ENCODE measurements at regions of chr16 and their contacts with region 1.

Region 1: DNA sequence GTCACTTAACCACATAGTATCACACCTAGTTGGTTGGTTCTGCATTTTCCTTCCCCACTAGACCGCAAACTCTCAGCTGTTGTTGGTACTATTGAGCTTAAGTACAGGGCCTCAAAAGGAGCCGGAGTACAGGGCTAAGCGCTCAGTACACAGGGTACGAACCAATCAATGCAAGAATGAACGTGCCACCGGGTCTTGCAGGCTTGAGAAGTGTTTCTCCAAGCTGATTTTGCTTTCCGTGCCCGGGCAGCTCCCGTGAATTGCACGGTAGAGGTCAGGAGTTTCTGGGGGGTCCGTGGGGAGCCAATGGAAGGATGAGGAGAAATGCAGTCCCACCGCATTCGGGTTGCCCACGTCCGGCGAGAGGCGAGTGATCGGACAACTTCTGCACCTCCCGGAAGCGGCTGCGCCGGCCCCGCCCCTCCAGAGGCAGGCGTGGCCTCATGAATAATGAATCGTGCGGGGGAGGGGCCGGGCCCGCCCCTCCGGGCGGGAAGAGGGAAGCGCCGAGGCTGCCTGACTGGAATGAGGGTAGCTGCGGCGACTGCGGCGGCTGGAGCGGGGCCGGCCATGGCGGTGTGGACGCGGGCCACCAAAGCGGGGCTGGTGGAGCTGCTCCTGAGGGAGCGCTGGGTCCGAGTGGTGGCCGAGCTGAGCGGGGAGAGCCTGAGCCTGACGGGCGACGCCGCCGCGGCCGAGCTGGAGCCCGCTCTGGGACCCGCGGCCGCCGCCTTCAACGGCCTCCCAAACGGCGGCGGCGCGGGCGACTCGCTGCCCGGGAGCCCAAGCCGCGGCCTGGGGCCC is at the start of gene SNTB2:
- DNase-seq: peak; percentile 76 to 97
- H3K4me3 ChIP-seq: peak within 1 kb of the TSS; percentile 83 to 91
- H3K27ac ChIP-seq: peak within 1 kb of the TSS; percentile 93 to 95
- H3K4me1 ChIP-seq: peaks cover 5 to 39% of the 10 kb centered on the region in 2 donors
- H3K27me3 ChIP-seq: no peaks in the 10 kb centered on the region
- CTCF ChIP-seq: no peak
- total RNA-seq, gene SNTB2: 19.7 TPM

Region 2: GRCh38 chr16:69132424-69133252 is 54.2 kb before region 1 on chr16 and contains the starts of genes CHTF8 and UTP4:
- intact Hi-C with region 1: loop called (anchors 5 kb)
- DNase-seq: peak; percentile 36 to 90
- H3K4me3 ChIP-seq: peak within 1 kb of the TSS; percentile 91 to 97
- H3K27ac ChIP-seq: peak within 1 kb of the TSS; percentile 84 to 85
- H3K4me1 ChIP-seq: peaks cover 3 to 13% of the 10 kb centered on the region in 2 donors
- H3K27me3 ChIP-seq: no peaks in the 10 kb centered on the region
- CTCF ChIP-seq: peak in 1 of 3 experiments; percentile 11
- total RNA-seq, gene CHTF8: 41.3 TPM
- total RNA-seq, gene UTP4: 45.9 TPM

Region 3: DNA sequence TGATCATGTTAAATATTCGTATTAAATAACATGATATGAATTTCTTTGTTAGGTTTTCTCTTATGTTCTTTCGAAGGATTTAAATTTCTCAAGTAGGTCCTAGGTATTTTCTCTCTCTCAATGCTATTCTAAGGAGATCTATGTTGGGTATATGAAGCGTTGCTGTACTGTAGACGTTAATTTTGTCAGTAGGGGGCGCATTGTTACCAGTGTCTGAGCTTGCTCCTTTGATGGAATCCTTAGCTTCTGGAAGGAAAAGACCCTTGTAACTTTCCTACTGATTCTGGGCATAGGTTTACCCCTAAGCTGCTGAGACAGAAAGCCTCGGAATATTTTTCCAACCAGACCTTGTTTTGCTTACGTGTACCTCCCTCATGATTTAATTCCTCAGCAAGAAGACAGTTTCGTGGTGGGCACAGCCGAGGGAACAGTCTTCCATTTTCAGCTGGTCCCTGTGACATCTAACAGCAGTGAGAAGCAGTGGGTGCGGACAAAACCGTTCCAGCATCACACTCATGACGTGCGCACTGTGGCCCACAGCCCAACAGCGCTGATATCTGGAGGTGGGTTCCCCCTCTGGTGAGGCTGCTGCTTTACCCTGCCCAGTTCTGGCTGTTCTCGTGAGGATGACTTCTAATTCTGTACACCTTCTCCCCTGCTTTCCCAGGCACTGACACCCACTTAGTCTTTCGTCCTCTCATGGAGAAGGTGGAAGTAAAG is 36.5 kb before region 1 on chr16:
- intact Hi-C with region 1: loop called (anchors 5 kb)
- DNase-seq: peak in 1 of 2 donors; percentile 76
- H3K4me3 ChIP-seq: no peak overlapping the region
- H3K27ac ChIP-seq: no peak overlapping the region
- H3K4me1 ChIP-seq: peaks cover 0 to 6% of the 10 kb centered on the region in 2 donors
- H3K27me3 ChIP-seq: no peaks in the 10 kb centered on the region
- CTCF ChIP-seq: peak; percentile 72 to 81 (median 77)

Region 4: DNA sequence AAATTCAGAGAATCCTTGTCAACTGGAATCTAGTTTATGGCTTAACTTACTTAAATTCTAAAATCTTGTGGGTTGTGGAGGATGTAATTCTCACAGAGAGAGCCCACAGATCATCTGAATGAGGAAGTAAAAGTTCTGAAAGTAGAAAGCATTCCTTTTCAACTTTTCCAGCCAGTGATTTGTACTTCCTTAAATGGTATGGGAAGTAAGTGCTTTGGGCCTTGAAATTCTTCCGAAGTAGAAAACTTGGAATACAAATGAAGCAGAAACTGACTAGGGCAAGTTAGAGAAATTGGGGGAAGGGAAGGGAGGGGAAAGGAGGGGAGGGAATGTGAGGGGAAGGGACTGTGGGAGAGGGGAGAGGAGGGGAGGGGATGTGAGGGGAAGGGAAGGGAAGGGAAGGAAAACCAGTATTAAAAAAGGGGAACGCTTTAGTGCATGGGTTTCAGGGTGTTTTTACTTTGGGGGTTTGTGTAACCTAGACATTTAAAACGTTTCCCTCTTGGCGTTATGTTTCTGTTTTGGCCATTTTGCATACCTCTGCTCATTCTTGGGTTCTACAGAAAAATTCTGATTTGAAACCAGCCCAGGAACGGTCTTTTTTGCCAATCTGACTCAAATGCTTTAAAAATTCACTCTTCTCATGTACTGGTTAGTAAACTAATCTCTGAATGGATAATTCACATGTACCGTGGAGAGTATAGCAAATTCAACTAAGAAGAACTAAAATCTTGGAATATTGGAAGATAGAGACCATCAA is 15.3 kb before region 1 on chr16:
- intact Hi-C with region 1: loop called (anchors 1 kb)
- DNase-seq: no peak
- H3K4me3 ChIP-seq: peak overlapping the region; percentile 26 to 41
- H3K27ac ChIP-seq: peak overlapping the region; percentile 87 to 92
- H3K4me1 ChIP-seq: peaks cover 13 to 25% of the 10 kb centered on the region in 2 donors
- H3K27me3 ChIP-seq: no peaks in the 10 kb centered on the region
- CTCF ChIP-seq: no peak

Region 5: GRCh38 chr16:69276148-69277115 is 89.6 kb after region 1 on chr16:
- intact Hi-C with region 1: loop called (anchors 5 kb)
- DNase-seq: peak; percentile 16 to 89
- H3K4me3 ChIP-seq: no peak overlapping the region
- H3K27ac ChIP-seq: peak overlapping the region; percentile 12 to 33
- H3K4me1 ChIP-seq: peaks cover 0 to 19% of the 10 kb centered on the region in 2 donors
- H3K27me3 ChIP-seq: no peaks in the 10 kb centered on the region
- CTCF ChIP-seq: no peak

Measured in ascending aorta (tissue), 2 donors.